ENCODE measurements at regions of chr1 and their contacts with region 1.

Region 1: DNA sequence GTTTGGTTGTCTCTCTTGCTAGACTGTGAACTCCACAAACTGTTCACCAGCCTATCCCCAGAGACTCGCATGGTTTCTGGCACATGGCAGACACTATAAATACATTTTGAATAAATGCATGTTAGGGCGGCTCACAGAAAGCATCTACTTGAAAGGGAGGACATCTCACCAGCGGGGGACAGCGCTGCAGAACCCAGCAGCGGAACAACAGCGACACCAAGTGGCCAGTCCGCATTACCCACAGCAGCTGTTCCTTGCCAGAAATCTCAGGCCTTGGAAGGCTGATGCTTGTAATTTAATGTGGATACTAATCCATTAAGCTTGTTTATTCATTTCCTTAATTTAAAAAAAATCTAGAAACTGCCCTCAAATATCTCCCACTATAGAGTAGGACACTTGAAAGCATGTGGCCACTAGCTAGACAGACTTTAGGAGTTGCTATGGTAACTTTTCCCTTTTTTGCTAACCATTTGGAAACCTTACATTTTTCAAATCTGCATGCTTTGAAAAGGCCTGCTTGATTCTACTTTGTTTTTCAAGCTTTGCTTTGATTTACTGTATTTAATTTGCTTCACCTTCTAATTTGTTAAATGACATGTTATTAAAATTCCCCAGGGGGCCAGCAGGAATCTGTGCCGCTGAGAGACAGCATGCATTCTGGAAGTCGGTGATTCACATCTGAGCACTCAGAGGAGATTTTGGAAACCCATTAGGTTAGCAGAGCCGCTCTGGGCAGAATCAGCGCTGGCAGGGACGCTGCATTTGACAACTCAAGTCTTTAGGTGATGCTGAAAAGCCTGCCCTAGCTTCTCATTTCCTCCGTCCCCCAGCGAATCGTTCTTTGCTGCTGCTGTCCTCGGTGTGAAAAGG is 63.5 kb upstream of the SSX2IP start:
- DNase-seq: peak; percentile 76
- H3K4me3 Mint-ChIP-seq: no peak overlapping the region
- H3K27ac Mint-ChIP-seq: peak overlapping the region; percentile 47
- H3K4me1 Mint-ChIP-seq: peaks cover 29% of the 10 kb centered on the region
- H3K27me3 Mint-ChIP-seq: no peaks in the 10 kb centered on the region
- CTCF ChIP-seq: peak; percentile 95

Region 2: GRCh38 chr1:83905315-83905907 is 848.3 kb before region 1 on chr1:
- CTCF ChIA-PET with region 1: no interaction called
- intact Hi-C with region 1: loop called (anchors 5 kb)
- DNase-seq: peak; percentile 18
- H3K4me3 Mint-ChIP-seq: no peak overlapping the region
- H3K27ac Mint-ChIP-seq: no peak overlapping the region
- H3K4me1 Mint-ChIP-seq: peaks cover 29% of the 10 kb centered on the region
- H3K27me3 Mint-ChIP-seq: no peaks in the 10 kb centered on the region
- CTCF ChIP-seq: no peak

Region 3: DNA sequence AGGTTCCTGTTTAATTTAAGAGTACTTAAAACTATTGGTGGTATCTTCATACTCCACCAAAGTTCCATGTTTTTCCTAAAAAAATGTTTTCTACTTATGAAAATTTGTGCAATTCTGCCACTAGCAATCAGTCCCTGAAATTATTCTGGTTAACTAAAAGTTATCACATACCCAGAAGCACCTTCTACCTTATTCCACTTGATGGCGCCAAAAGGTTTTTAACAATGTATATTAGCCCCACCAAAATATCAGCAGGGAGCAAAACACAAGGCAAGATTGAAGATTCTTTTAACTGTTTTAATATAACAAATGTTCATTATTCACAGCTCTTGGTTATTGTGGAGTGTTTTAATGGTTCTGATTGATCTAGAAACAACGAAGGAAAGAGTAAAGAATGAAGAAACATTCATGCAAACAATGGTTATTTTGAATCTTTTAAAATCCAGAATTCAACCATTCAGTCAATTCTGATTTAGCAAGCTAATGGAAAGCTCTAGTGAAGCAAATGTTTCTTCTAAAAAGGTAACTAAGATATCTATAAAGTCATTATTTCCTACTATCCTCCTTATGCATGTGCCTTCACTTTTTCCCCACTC is 822.0 kb before region 1 on chr1:
- CTCF ChIA-PET with region 1: no interaction called
- intact Hi-C with region 1: loop called (anchors 10 kb)
- DNase-seq: peak; percentile 25
- H3K4me3 Mint-ChIP-seq: no peak overlapping the region
- H3K27ac Mint-ChIP-seq: no peak overlapping the region
- H3K4me1 Mint-ChIP-seq: no peaks in the 10 kb centered on the region
- H3K27me3 Mint-ChIP-seq: no peaks in the 10 kb centered on the region
- CTCF ChIP-seq: peak; percentile 24

Region 4: GRCh38 chr1:84573967-84574842 is 179.5 kb before region 1 on chr1 and contains the start of gene CTBS:
- CTCF ChIA-PET with region 1: no interaction called
- intact Hi-C with region 1: loop called (anchors 10 kb)
- DNase-seq: peak; percentile 80
- H3K4me3 Mint-ChIP-seq: peak within 1 kb of the TSS; percentile 96
- H3K27ac Mint-ChIP-seq: peak within 1 kb of the TSS; percentile 96
- H3K4me1 Mint-ChIP-seq: peaks cover 27% of the 10 kb centered on the region
- H3K27me3 Mint-ChIP-seq: no peaks in the 10 kb centered on the region
- CTCF ChIP-seq: no peak
- total RNA-seq, gene CTBS: 18.2 and 20.3 TPM in 2 replicates

Region 5: GRCh38 chr1:84620720-84621313 is 132.9 kb before region 1 on chr1:
- CTCF ChIA-PET with region 1: no interaction called
- intact Hi-C with region 1: loop called (anchors 1 kb)
- DNase-seq: peak; percentile 90
- H3K4me3 Mint-ChIP-seq: peak overlapping the region; percentile 75
- H3K27ac Mint-ChIP-seq: peak overlapping the region; percentile 32
- H3K4me1 Mint-ChIP-seq: peaks cover 14% of the 10 kb centered on the region
- H3K27me3 Mint-ChIP-seq: no peaks in the 10 kb centered on the region
- CTCF ChIP-seq: peak; percentile 97

Region 6: GRCh38 chr1:84668185-84668584 is 85.6 kb before region 1 on chr1:
- CTCF ChIA-PET with region 1: interaction called, 6 read pairs
- intact Hi-C with region 1: loop called (anchors 2 kb)
- DNase-seq: no peak
- H3K4me3 Mint-ChIP-seq: no peak overlapping the region
- H3K27ac Mint-ChIP-seq: no peak overlapping the region
- H3K4me1 Mint-ChIP-seq: peaks cover 1% of the 10 kb centered on the region
- H3K27me3 Mint-ChIP-seq: no peaks in the 10 kb centered on the region
- CTCF ChIP-seq: no peak